Posterior vena cava (tissue), 2 donors: ENCODE measurements at regions of chr13 and their contacts with region 1.

Region 1: GRCh38 chr13:26433776-26434175 is 123.7 kb upstream of the WASF3 start:
- DNase-seq: no peak

Region 2: DNA sequence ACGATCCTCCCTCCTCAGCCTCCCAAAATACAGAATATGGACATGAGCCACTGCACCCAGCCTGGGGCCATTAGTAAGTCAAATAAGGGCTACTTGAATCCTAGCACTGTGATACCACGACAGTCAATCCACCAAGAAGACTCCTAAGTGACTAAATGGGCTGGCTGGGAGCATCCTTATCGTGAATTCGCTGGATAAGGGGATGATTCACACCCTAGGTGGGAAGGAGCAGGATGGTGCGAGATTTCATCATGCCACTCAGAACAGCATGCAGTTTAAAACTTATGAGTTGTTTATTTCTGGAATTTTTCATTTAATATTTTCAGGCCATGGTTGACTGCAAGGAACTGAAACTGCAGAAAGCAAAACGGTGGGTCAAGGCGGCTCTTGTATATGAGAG is 1031.8 kb before region 1 on chr13:
- intact Hi-C with region 1: loop called in 1 of 2 experiments (anchors 5 kb)
- DNase-seq: no peak

Region 3: DNA sequence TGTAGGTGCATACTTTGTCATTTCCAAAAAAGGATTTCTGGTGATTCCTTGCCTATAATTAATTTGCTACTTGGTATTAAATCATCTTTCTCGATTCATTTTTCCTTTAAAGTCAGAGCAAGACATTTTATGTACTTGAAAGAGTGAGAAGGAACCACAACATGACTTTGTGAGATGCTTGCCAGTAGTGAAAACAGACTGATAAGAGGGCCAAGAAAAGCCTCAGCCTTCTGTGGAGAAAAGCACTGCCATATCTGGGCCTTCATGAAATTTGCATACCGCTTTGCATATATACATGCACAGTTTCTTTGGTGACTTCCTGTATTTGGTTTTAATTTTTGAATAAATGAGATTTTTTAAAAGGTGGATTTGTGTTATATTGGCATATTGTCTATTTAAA is 51.4 kb before region 1 on chr13:
- intact Hi-C with region 1: no loop called
- DNase-seq: no peak

Region 4: GRCh38 chr13:27086599-27087265 is 653.0 kb after region 1 on chr13:
- intact Hi-C with region 1: loop called in 1 of 2 experiments (anchors 5 kb)
- DNase-seq: no peak